ENCODE measurements at regions of chr3 and their contacts with region 1.

Region 1: DNA sequence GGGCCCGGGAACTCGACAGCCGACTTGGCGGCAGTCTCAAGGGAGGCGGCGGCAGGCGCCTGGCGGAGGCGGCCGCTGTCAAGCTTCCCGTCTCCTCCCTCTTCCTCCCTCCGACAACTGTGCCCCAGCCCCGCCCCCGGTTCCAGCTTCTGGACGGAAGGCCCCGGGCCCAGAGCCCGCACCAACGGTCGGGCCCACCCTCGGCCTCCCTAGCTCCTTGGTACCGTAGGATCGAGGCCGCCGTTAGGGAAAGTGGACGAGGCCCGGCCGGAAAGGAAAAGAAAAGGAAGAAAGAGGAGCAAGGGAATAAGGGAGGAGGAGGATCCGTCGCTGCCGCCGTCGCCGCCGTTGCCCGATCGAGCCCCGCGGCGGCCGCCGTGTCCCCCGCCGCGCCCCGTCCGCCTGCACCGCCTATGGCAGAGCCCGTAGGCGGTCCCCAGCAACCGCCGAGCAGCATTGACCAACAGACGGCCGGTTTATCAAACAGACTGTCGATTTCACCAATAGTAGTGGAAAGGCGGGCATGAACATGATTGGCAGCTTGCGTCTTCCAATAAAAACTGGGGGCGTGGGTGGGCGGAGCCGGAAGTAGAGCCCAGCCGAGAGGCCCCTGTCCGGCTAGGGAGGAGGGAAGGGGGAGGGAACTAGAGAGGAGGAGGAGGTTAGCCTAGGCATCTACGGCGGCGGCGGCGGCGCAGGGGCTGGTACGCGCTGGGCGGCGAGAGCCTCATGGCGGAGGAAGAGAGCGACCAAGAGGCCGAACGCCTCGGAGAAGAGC is at the starts of genes CGGBP1 and ZNF654:
- DNase-seq: peak; percentile 98
- ATAC-seq: peak; percentile 97
- total RNA-seq, gene CGGBP1: 40.2 TPM
- total RNA-seq, gene ZNF654: 11.7 TPM

Region 2: DNA sequence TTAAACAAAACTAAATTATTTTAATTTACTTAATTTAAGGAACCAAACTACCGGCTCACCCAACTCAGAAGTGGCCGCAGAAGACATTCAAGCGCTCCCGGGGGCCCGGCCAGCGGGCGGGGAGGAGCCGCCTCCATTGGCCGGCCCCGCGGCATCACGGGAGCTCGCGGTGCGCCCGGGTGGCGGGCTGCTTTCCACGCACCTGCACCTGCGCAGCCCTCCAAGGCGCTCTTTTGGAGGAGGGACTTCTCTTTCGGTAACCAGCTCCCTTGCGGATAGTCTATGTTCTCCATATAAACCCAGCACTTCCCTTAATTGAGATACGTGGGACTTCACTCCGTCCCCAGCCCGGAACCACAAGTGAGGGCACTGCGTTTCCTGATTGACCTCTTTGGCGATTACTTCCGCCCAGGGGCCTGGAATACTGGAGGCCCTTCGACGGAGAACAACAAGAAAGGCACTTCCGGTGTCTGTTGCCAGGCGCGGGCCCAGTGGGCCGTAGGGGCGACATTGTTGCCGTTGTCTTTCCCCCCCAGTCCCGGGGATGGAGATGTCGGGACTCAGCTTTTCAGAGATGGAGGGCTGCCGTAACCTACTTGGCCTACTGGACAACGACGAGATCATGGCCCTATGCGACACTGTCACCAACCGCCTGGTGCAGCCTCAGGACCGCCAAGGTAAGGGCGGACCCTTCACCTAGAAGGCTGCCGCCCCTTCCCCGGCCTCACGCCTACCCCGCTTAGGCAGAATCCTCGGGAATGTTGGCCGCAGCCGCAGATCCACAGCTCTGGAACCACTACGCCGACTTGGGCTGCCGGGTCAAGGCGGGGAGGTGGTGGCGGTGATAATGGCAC is 91.0 kb after region 1 on chr3 and contains the start of gene C3orf38:
- intact Hi-C with region 1: loop called (anchors 5 kb)
- DNase-seq: peak; percentile 91
- ATAC-seq: peak; percentile 98
- total RNA-seq, gene C3orf38: 12.8 TPM

Region 3: GRCh38 chr3:88343259-88343658 is 284.5 kb after region 1 on chr3:
- intact Hi-C with region 1: no loop called
- DNase-seq: no peak
- ATAC-seq: no peak